Esophagus squamous epithelium (tissue), 5 donors: ENCODE measurements at regions of chr18 and their contacts with region 1.

Region 1: DNA sequence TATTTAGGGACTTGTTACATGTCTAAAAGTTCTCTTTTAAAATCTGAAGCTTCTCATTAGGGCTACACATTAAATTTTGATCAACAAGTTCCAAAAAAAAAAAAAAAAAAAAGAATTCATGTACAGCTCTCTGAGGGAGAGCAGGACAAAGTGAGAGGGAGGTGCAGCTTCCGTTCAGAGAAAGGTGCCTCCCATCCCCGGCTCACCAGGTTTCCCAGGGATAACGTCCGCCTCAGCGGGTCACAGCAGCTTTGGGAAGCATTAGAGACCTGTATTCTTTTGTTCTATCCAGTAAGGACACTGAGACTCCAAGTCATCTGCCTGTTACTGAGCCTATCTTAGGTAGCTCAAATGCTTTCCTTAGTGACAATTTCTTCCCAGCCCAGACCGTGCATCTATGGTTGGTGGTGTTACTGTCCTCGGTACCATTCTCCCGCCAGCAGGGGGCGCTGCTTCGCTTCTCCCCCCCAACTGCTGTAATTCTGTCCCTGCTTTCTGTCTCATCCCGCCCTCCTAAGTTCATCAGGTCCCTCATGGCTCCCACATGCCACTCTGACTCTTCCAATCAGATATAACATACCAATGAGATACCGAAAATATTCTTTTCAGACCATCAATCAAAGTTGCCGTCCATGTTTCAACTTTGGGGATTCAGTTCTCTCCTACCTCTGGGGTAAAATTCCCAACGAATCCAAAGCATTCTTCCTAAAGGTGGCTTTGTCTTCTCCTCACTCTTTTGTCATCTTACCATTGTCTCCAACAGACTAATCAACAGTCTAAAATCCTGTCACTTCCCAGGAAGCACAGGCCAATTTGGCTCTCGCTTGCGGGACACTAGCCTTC is 466.5 kb downstream of the METTL4 start:
- DNase-seq: no peak
- H3K4me3 ChIP-seq: no peak overlapping the region
- H3K27ac ChIP-seq: no peak overlapping the region
- H3K4me1 ChIP-seq: no peaks in the 10 kb centered on the region
- H3K27me3 ChIP-seq: no peaks in the 10 kb centered on the region
- CTCF ChIP-seq: peak in 5 of 6 experiments; percentile 56 to 77 (median 75)
- POLR2A ChIP-seq: no peak

Region 2: DNA sequence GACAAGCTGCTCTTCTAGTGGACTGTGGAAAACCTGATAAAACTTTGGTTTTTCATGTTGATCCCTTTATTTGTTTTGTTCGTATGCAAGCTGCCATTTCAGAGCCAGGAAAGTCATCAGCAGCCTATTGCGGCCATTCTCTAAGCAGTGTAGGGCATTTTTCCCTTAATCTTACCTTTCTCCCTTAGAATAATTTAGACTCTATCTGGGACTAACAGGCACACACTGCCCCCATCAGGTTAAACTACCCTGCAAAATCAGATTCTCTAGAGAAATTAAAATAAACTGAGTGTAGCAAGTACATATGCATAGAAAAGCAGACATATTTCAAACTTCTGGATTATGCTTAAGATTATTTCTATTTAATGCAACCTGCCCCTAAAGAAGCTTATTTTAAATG is 119.0 kb after region 1 on chr18:
- intact Hi-C with region 1: loop called (anchors 5 kb)
- DNase-seq: no peak
- H3K4me3 ChIP-seq: peak overlapping the region in 3 of 4 donors; percentile 19 to 51 (median 23)
- H3K27ac ChIP-seq: no peak overlapping the region
- H3K4me1 ChIP-seq: peaks cover 0 to 12% (median 4%) of the 10 kb centered on the region in 3 donors
- H3K27me3 ChIP-seq: no peaks in the 10 kb centered on the region
- CTCF ChIP-seq: peak in 5 of 6 experiments; percentile 25 to 68 (median 47)
- POLR2A ChIP-seq: no peak

Region 3: GRCh38 chr18:2547477-2548087 is 442.7 kb after region 1 on chr18:
- intact Hi-C with region 1: loop called (anchors 10 kb)
- DNase-seq: no peak
- H3K4me3 ChIP-seq: no peak overlapping the region
- H3K27ac ChIP-seq: no peak overlapping the region
- H3K4me1 ChIP-seq: no peaks in the 10 kb centered on the region
- H3K27me3 ChIP-seq: no peaks in the 10 kb centered on the region
- CTCF ChIP-seq: peak; percentile 24 to 64 (median 45)
- POLR2A ChIP-seq: no peak